Sigmoid colon (tissue), 7 donors: ENCODE measurements at regions of chr3 and their contacts with region 1.

Region 1: DNA sequence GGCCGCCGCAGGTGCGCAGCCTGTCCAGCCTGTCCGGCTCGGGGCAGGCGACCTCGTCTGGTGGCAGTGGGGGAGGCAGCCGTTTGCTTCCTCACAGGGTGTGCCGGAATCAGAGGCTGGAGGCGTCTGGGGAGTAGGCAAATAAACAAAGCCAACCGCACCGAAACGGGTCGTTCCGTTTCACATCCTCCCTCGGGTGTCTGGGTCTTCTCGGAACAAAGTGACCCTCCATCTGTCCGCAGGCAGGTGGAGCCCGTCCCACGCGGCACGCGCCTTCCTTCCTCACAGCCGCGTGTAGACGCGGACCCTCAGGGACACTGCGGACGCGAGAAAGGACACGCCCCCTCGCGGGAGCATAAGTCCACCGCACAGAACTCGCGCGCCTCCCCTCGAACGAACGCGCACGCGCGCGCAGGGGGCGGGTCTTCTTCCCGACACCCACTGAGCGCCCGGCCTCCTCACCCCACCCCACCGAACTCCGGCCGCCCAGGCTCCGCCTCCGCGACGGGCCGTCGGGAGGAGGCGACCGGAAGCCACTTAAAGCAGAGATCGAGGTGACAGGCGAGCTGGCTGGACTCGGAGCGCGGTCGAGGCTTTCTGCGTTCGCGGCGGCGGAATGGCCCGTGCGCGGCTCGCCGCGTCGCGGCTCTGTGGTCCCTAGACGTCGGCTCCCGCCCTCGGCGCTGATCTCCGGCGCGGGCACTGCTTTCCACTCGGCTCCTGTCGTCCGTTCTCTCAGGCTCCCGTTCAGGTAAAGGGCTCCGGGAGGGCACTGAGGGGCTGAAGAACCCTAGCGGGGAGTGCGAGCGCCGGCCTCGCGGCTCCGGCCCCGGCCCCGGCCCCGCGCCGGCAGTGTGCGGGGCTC is at the start of gene TIPARP:
- DNase-seq: peak; percentile 100
- H3K4me3 ChIP-seq: peak within 1 kb of the TSS; percentile 59 to 87 (median 82)
- H3K27ac ChIP-seq: peak within 1 kb of the TSS; percentile 96 to 98 (median 98)
- H3K4me1 ChIP-seq: peaks cover 0 to 38% (median 29%) of the 10 kb centered on the region in 4 donors
- H3K27me3 ChIP-seq: no peaks in the 10 kb centered on the region
- CTCF ChIP-seq: peak; percentile 61 to 78 (median 64)
- EP300 ChIP-seq: peak in 2 of 4 donors; percentile 25 to 45
- POLR2A ChIP-seq: peak; percentile 96 to 97
- total RNA-seq, gene TIPARP: 25.3 to 42.8 (median 27.0) TPM

Region 2: GRCh38 chr3:156535162-156535627 is 139.1 kb before region 1 on chr3:
- intact Hi-C with region 1: loop called (anchors 5 kb)
- DNase-seq: peak; percentile 94
- H3K4me3 ChIP-seq: no peak overlapping the region
- H3K27ac ChIP-seq: peak overlapping the region; percentile 71 to 93 (median 85)
- H3K4me1 ChIP-seq: peaks cover 0 to 85% (median 61%) of the 10 kb centered on the region in 4 donors
- H3K27me3 ChIP-seq: no peaks in the 10 kb centered on the region
- CTCF ChIP-seq: no peak
- EP300 ChIP-seq: peak in 3 of 4 donors; percentile 42 to 77 (median 61)
- POLR2A ChIP-seq: no peak

Region 3: DNA sequence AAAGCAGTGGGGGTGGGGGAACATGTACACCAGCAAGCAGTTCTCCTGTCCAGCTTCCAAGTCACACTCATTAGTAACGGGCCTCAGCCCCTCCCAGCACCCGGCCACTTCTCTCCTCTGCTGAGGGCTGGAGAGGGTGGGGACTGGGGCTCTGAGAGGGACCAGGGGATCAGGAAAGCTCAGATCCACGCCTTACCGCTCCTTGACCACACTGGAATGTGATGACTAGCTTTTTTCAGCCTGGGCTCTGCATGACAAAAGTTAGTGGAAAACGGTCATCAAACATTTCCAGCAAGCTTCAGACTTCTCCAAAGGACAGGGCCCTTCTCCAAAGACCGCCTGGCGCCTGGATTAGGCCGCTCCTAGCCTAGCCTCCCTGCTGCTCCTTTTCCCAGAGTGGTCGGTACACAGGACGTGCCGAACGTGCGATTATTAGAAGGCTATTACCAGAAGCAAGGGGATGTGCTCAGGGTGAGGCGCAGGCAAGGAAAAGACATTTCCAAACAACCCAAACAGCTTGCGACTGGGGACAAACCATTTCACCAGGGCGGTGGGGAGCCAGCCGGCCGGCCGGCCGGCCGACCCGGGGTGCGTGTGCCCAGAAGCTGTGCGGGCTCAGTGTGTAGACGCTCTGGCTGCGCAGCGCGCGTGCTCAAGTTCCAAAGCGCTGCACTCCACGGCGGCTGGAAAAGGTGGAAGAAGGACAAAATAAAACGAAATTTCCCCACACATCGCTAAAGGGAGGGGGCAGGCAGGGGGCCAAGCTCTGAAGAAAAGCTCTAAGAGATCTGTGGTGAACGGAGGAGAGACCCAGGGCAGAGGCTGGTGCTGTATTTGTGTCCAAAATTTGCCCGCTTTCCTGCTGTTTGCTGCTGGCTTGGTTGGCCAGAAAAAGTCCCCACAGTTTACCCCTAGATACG is 68.3 kb before region 1 on chr3:
- intact Hi-C with region 1: loop called (anchors 5 kb)
- DNase-seq: peak; percentile 71
- H3K4me3 ChIP-seq: peak overlapping the region; percentile 15 to 49 (median 46)
- H3K27ac ChIP-seq: peak overlapping the region; percentile 64 to 86 (median 78)
- H3K4me1 ChIP-seq: peaks cover 0 to 47% (median 19%) of the 10 kb centered on the region in 4 donors
- H3K27me3 ChIP-seq: no peaks in the 10 kb centered on the region
- CTCF ChIP-seq: no peak
- EP300 ChIP-seq: no peak
- POLR2A ChIP-seq: peak in 1 of 2 donors; percentile 12

Region 4: DNA sequence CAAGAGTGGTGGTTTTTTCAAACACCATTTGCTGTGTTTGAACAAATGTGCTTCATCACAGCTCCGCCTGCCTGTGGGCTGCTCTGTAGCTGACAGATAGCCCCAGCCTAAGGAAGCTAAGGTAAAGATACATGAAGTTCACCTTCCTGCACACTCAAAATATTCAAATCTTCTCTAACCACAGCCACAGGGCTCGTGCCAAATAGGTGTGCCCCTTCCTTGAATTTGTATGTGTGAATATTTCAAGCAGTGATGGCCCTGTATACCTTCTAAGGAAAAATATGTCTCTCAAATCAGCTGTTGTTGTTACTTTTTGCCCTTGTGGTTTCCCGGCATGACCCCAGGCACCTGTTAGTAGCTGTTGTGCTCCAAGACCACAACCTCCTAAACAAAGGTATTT is 392.8 kb after region 1 on chr3:
- intact Hi-C with region 1: no loop called
- DNase-seq: no peak
- H3K4me3 ChIP-seq: no peak overlapping the region
- H3K27ac ChIP-seq: no peak overlapping the region
- H3K4me1 ChIP-seq: peaks cover 0 to 26% (median 5%) of the 10 kb centered on the region in 4 donors
- H3K27me3 ChIP-seq: no peaks in the 10 kb centered on the region
- CTCF ChIP-seq: no peak
- EP300 ChIP-seq: no peak
- POLR2A ChIP-seq: no peak

Region 5: DNA sequence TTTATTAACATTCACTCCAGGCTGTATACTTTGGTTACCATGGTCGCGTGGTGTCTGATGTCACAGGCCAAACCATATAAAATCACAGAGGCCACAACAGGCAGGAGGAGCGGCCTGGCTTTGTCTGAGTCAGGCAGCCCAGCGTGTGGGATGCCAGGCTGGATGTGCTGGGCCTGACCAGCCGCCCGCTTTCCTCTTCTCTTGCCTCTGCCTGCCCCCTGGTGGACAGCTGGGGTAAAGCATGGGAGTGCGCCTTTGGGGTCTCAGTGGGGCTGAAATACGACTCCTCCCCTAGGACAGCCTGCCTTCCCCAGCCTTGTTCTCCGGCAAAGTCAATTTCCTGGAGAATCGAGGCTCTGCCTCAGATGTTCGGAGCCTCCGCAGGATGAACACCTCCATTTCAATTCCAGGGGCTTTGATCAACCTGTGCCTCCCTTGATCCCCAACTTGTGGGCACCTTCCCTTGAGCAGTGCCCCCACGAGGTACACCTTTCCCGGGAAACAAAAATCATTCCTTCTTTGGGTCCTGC is 407.5 kb after region 1 on chr3:
- intact Hi-C with region 1: loop called (anchors 1 kb)
- DNase-seq: peak; percentile 94
- H3K4me3 ChIP-seq: no peak overlapping the region
- H3K27ac ChIP-seq: peak overlapping the region; percentile 51 to 81 (median 62)
- H3K4me1 ChIP-seq: peaks cover 0 to 51% (median 29%) of the 10 kb centered on the region in 4 donors
- H3K27me3 ChIP-seq: no peaks in the 10 kb centered on the region
- CTCF ChIP-seq: peak; percentile 97 to 100 (median 98)
- EP300 ChIP-seq: no peak
- POLR2A ChIP-seq: no peak

Region 6: DNA sequence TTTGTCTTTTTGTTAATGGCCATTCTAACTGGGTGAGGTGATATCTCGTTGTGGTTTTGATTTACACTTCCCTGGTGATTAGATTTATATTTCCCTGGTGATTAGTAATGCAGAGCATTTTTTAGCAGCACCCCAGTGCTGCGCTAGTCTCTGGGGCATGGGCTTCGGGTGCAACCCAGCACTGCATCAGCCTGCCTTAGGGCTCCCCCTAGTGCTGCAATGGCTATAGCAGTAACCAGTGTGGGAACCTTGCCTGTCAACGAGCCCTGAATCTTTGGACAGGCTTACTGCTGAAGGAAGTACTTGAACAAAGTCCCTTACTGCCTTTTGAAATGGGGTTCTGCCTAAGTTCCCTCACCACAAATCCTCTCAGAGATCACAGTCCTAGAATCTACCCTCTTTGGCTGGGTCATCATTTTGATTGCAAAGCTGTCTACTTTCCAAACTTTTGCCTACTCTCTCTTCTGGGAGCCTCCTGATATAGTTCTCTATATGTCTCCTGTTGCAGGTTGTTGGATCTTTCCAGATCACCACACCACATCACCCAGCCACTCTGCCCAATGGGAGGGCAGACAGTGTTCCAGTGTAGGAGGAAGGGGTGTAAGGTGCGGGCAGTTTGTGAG is 564.9 kb after region 1 on chr3:
- intact Hi-C with region 1: loop called (anchors 5 kb)
- DNase-seq: peak; percentile 77
- H3K4me3 ChIP-seq: no peak overlapping the region
- H3K27ac ChIP-seq: peak overlapping the region in 3 of 4 donors; percentile 12 to 67 (median 55)
- H3K4me1 ChIP-seq: peaks cover 0 to 25% (median 19%) of the 10 kb centered on the region in 4 donors
- H3K27me3 ChIP-seq: no peaks in the 10 kb centered on the region
- CTCF ChIP-seq: peak; percentile 39 to 66 (median 56)
- EP300 ChIP-seq: no peak
- POLR2A ChIP-seq: no peak